Endothelial cell of umbilical vein (primary cell): ENCODE measurements at regions of chr7 and their contacts with region 1.

Region 1: GRCh38 chr7:121081327-121081936 is 92.9 kb downstream of the CPED1 start:
- DNase-seq: peak; percentile 77
- H3K4me3 ChIP-seq: no peak overlapping the region
- H3K27ac ChIP-seq: no peak overlapping the region
- H3K4me1 ChIP-seq: peaks cover 24% of the 10 kb centered on the region
- H3K27me3 ChIP-seq: no peaks in the 10 kb centered on the region
- CTCF ChIP-seq: peak; percentile 40 to 44
- POLR2A ChIP-seq: no peak

Region 2: DNA sequence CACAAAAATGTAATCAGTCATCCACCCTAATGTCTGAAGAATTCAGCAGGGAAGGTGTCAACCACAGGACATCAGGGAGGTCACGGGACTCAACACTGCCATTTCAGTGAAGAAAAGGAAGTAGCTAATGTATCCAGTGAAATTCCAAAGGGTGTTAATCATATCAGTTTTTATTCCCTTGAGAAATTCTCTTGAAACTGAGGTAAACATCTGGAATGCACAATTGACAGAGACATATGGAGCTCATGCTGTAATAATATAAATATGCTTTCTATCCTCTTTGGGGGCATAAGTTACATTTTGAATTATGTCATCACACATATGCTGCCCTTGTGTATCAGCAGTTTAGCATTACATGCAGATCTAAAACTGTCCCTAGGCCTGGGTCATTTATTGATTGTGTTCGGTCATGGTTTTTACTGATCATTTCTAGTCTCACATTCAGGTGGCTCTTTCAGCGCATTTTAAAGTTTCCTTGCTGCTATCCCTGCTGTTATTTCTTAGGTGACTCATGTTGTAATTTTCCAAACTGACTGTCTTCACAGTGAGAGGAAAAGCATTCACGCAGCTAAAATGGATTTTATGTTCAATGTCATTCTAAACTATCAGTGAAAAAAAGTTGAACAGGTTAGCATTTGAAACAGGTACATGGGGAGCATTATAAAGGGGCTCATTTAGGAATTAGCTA is 497.4 kb before region 1 on chr7:
- CTCF ChIA-PET with region 1: no interaction called
- POLR2A ChIA-PET with region 1: no interaction called
- dilution Hi-C with region 1: no loop called
- intact Hi-C with region 1: loop called (anchors 10 kb)
- DNase-seq: peak; percentile 77
- H3K4me3 ChIP-seq: no peak overlapping the region
- H3K27ac ChIP-seq: peak overlapping the region; percentile 65
- H3K4me1 ChIP-seq: peaks cover 18% of the 10 kb centered on the region
- H3K27me3 ChIP-seq: no peaks in the 10 kb centered on the region
- CTCF ChIP-seq: no peak
- POLR2A ChIP-seq: peak; percentile 48

Region 3: GRCh38 chr7:120941064-120941463 is 140.4 kb before region 1 on chr7:
- CTCF ChIA-PET with region 1: interaction called, 3 read pairs
- POLR2A ChIA-PET with region 1: no interaction called
- dilution Hi-C with region 1: no loop called
- intact Hi-C with region 1: loop called (anchors 1 kb)
- DNase-seq: peak; percentile 75
- H3K4me3 ChIP-seq: no peak overlapping the region
- H3K27ac ChIP-seq: peak overlapping the region; percentile 87
- H3K4me1 ChIP-seq: peaks cover 46% of the 10 kb centered on the region
- H3K27me3 ChIP-seq: no peaks in the 10 kb centered on the region
- CTCF ChIP-seq: peak in 1 of 2 donors; percentile 26
- POLR2A ChIP-seq: no peak

Region 4: DNA sequence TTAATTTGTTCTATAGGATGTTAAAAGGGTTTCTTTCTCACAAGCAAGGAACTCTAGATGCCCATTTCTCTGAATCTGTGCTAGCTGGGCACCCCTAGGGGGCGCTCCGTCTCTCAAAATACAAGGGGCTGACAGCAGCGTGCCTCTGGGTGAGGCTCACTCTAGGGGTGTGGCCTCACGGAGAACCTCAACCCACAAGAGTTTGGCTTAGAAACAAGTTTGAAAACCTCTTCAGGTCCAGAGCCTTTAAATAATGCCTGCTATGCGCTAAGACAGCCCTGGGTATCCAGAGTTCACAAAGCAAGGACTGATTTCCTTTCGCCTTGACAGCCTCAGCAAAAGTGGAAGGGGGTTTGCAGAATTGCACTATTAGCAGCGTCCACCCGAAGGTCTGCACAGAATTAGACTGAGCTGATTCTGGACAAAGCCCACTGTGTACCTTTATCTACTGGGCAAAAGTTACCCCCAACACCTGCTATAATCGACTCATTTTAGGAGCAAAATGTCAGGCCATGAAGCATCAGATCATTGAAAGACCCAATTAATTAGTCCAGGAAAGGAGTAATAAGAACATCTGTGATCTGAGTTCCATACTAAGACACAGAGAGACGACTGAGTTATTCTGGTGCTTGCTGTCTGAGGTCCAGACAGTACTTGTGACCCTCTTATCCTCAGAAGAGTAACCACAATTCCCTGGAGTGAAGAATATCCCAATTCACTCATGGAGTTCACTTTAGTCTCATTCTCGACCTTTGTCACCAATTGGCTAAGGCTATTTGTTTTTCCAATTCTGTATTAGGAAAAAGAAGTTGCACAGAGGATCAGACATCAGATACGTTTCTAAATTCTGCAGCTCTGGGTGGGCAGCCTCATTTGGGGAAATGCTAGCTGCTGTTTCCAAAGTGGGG is 93.5 kb before region 1 on chr7:
- CTCF ChIA-PET with region 1: interaction called, 156 read pairs
- POLR2A ChIA-PET with region 1: no interaction called
- dilution Hi-C with region 1: loop called (anchors 25 kb)
- intact Hi-C with region 1: loop called (anchors 1 kb)
- DNase-seq: peak; percentile 89
- H3K4me3 ChIP-seq: peak overlapping the region; percentile 39 to 80 (median 64)
- H3K27ac ChIP-seq: no peak overlapping the region
- H3K4me1 ChIP-seq: peaks cover 10% of the 10 kb centered on the region
- H3K27me3 ChIP-seq: peaks cover 0 to 9% of the 10 kb centered on the region in 2 experiments
- CTCF ChIP-seq: peak; percentile 95 to 97
- POLR2A ChIP-seq: no peak

Region 5: DNA sequence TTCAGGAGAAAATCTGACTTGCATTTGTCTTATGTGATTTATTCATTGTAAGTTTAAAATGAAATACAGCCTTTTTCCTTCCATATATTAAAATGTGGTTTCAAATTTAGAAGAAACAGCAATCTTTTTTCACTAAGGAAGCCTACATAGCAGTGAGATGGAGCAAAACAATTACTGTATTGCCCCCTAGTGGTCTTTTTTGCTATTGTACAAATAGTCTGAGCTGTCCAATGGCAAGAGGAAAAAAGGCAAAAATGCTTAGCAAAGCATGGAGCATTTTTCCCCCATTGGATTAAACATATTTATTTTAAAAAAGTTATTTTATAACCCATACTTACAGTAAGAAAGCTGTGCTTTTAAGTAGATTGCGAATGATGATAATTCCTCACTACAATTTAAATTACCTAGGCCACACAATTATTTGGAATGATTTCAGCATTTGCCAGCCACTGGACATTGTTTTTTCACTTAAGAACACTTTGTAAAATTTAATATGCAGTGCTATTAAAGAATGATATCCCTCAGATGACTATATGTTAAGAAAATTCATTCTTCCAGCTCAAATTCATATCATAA is 26.6 kb after region 1 on chr7:
- CTCF ChIA-PET with region 1: interaction called, 37 read pairs
- POLR2A ChIA-PET with region 1: no interaction called
- dilution Hi-C with region 1: no loop called
- intact Hi-C with region 1: no loop called
- DNase-seq: peak; percentile 78
- H3K4me3 ChIP-seq: no peak overlapping the region
- H3K27ac ChIP-seq: no peak overlapping the region
- H3K4me1 ChIP-seq: no peaks in the 10 kb centered on the region
- H3K27me3 ChIP-seq: peaks cover 12 to 16% of the 10 kb centered on the region in 2 experiments
- CTCF ChIP-seq: peak; percentile 57 to 59
- POLR2A ChIP-seq: no peak